Panc1 (cell line): ENCODE measurements at regions of chr4 and their contacts with region 1.

Region 1: GRCh38 chr4:94378047-94378446 is 35.4 kb upstream of the HPGDS start:
- DNase-seq: no peak
- ATAC-seq: no peak
- H3K4me3 ChIP-seq: no peak overlapping the region
- H3K27ac ChIP-seq: no peak overlapping the region
- H3K4me1 ChIP-seq: no peaks in the 10 kb centered on the region
- H3K27me3 ChIP-seq: no peaks in the 10 kb centered on the region; the same call in 1 of the 2 replicates
- CTCF ChIP-seq: no peak

Region 2: DNA sequence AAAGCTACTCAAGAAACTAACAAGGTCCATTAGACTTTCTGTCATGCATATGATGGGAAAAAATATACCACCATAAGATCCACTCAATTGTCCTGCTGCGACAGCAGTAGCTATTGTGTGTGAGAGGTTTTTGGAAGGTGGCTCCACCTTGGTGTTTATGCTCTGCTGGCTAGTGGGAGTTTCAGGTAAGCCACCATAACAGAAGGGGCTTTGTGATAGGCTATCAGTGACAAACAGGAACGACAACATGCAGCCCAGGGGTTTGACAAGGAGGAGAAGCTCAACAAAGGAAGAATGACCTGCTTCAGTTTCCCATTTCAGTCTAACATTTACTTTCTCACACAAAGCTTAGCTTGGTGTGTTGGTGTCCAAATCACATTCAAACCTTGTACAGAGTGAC is 366.9 kb before region 1 on chr4:
- CTCF ChIA-PET with region 1: no interaction called
- POLR2A ChIA-PET with region 1: no interaction called
- in situ Hi-C with region 1: no loop called
- intact Hi-C with region 1: no loop called
- DNase-seq: no peak
- ATAC-seq: no peak
- H3K4me3 ChIP-seq: no peak overlapping the region
- H3K27ac ChIP-seq: no peak overlapping the region
- H3K4me1 ChIP-seq: no peaks in the 10 kb centered on the region
- H3K27me3 ChIP-seq: no peaks in the 10 kb centered on the region
- CTCF ChIP-seq: no peak

Region 3: GRCh38 chr4:94714365-94715160 is 336.5 kb after region 1 on chr4:
- CTCF ChIA-PET with region 1: no interaction called
- POLR2A ChIA-PET with region 1: interaction called, 10 read pairs
- in situ Hi-C with region 1: no loop called
- intact Hi-C with region 1: no loop called
- DNase-seq: no peak
- ATAC-seq: no peak
- H3K4me3 ChIP-seq: no peak overlapping the region
- H3K27ac ChIP-seq: no peak overlapping the region
- H3K4me1 ChIP-seq: no peaks in the 10 kb centered on the region
- H3K27me3 ChIP-seq: 0 out of 2 replicates have a peak, but pooled peaks cover 2% of the 10 kb centered on the region
- CTCF ChIP-seq: no peak